Endothelial cell of umbilical vein (primary cell): ENCODE measurements at regions of chr3 and their contacts with region 1.

Region 1: DNA sequence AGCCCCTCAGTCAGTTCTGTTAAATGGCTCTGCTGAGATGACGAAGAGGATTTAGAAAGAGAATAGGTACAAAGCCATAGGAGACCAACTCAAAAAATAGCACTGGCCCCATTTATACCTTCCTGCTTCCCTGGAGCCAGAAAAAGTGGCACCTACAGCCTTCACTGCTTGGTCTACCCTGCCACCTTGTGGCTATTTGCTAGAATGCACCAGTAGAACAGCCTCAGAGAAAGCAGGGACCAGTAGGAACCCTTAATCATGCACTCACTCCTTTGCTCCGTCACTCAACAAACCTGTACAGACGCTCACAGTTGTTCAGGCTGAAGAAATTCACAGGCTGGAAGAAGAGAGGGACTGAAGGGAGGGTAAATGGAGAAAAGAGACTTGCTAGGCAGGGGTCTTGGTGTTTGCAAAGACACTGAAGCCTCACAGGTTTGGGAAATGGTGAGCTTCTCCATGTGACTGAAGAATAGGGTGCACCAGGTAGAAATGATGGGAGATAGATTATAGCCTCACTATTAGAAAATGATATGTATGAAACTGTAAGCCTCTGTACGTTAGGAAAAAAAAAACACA is 12.1 kb upstream of the RTP2 start:
- DNase-seq: peak; percentile 71
- H3K4me3 ChIP-seq: no peak overlapping the region
- H3K27ac ChIP-seq: no peak overlapping the region
- H3K4me1 ChIP-seq: no peaks in the 10 kb centered on the region
- H3K27me3 ChIP-seq: no peaks in the 10 kb centered on the region
- CTCF ChIP-seq: peak; percentile 87 to 89
- POLR2A ChIP-seq: no peak

Region 2: DNA sequence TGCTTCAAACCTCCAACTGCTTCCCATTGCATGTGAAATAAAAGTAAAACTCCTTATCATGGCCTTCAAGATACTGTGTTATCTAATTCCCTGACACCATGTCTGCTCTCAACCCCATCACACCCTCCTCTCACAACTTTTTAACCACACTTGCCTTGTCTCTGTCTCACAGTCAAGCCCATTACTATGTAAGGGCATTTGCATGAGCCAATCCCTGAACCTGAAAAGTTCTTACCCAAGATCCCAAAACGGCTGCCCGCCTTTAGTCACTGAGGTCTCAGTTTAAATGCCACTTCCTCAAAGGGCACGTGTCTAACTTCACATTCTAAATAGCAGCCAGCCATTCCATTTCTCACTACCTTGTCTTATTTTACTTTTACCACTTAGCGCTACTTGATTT is 127.4 kb before region 1 on chr3:
- CTCF ChIA-PET with region 1: no interaction called
- POLR2A ChIA-PET with region 1: no interaction called
- dilution Hi-C with region 1: no loop called
- intact Hi-C with region 1: no loop called
- DNase-seq: no peak
- H3K4me3 ChIP-seq: no peak overlapping the region
- H3K27ac ChIP-seq: no peak overlapping the region
- H3K4me1 ChIP-seq: no peaks in the 10 kb centered on the region
- H3K27me3 ChIP-seq: no peaks in the 10 kb centered on the region
- CTCF ChIP-seq: no peak
- POLR2A ChIP-seq: no peak

Region 3: DNA sequence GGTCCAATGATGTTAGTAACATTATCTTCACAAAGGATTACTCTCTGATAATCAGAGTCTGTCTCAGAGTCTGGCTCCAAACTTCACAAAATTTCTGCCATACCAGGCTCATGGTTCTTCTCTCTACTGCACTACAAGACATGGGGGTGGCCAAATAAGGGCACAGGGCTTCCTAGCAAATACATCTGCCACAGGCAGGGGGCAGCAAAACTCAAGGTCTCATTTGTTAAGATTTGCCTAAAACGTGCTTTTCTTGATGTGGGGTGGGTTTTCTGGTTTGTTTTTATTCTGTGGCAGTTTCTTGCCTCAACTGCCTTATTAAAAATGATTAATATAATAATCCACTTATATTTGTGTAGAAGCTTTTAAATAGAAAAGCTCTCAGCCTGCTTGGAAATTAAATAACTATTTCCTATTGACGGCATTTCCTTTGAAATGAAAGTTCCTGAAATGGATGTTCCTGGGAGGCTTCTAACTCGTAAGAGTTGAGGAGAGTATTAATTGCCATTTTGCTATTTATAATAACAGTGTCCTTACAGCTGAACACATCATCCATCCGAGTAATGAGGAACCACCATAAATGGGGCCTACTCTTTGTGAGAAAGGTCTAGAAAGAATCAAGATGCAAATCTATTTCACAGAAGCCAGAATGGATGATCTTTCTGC is 98.1 kb before region 1 on chr3:
- CTCF ChIA-PET with region 1: interaction called, 17 read pairs
- POLR2A ChIA-PET with region 1: no interaction called
- dilution Hi-C with region 1: no loop called
- intact Hi-C with region 1: loop called (anchors 1 kb)
- DNase-seq: peak; percentile 37
- H3K4me3 ChIP-seq: no peak overlapping the region
- H3K27ac ChIP-seq: no peak overlapping the region
- H3K4me1 ChIP-seq: no peaks in the 10 kb centered on the region
- H3K27me3 ChIP-seq: no peaks in the 10 kb centered on the region
- CTCF ChIP-seq: peak; percentile 64 to 74
- POLR2A ChIP-seq: no peak

Region 4: GRCh38 chr3:187900993-187901755 is 186.7 kb after region 1 on chr3:
- CTCF ChIA-PET with region 1: no interaction called
- POLR2A ChIA-PET with region 1: no interaction called
- dilution Hi-C with region 1: no loop called
- intact Hi-C with region 1: no loop called
- DNase-seq: no peak
- H3K4me3 ChIP-seq: no peak overlapping the region
- H3K27ac ChIP-seq: no peak overlapping the region
- H3K4me1 ChIP-seq: no peaks in the 10 kb centered on the region
- H3K27me3 ChIP-seq: peaks cover 4 to 5% of the 10 kb centered on the region in 2 experiments
- CTCF ChIP-seq: no peak
- POLR2A ChIP-seq: no peak